ENCODE measurements at regions of chr16 and their contacts with region 1.

Region 1: DNA sequence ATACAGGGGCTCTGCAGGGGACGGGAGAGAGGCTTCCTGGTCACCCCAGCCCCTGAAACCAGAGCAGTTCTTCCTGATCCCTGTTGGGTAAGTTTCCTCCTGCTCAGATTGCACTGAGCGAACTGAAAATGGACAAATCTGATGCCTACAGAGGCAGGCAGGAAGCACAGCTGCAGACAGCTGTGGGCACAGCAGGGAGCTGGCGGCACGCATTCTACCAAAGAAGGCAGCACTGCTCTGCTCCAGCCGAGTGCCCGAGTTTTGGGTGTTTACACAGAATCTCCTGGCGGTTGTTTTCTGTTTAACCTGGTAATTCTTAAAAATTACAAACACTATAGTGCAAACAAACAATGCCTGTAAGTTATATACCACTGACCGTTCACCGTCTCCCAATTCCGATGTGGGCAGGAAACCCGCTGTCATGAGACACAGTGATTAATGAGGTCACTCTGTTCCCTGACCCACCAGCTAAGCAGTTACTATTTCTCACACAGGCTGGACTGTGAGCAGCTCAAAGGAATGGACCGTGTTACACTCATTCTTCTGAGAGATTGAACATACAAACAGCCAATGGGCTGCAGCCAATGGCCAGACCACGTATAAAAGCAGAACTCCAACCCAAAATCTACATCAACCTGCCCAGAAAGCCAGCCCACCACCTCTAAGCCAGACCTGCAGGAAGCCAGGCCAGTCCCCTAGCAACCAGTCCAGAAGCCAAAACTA is 25.5 kb downstream of the NSMCE1 start:
- DNase-seq: peak; percentile 87 to 95
- H3K4me3 ChIP-seq: peak overlapping the region; percentile 19 to 33
- H3K27ac ChIP-seq: peak overlapping the region; percentile 83
- H3K4me1 ChIP-seq: peaks cover 66% of the 10 kb centered on the region
- H3K27me3 ChIP-seq: no peaks in the 10 kb centered on the region
- CTCF ChIP-seq: no peak
- POLR2A ChIP-seq: no peak

Region 2: GRCh38 chr16:27326738-27327585 is 83.9 kb after region 1 on chr16:
- intact Hi-C with region 1: loop called (anchors 5 kb)
- DNase-seq: peak in 1 of 2 donors; percentile 96
- H3K4me3 ChIP-seq: peak overlapping the region; percentile 8 to 9
- H3K27ac ChIP-seq: peak overlapping the region; percentile 93
- H3K4me1 ChIP-seq: peaks cover 97% of the 10 kb centered on the region
- H3K27me3 ChIP-seq: no peaks in the 10 kb centered on the region
- CTCF ChIP-seq: no peak
- POLR2A ChIP-seq: no peak

Measured in vagina (tissue), 2 donors.